Activated naive CD4-positive, alpha-beta T cell treated with anti-CD3 and anti-CD28 coated beads for 36 hours (primary cell): ENCODE measurements at regions of chr2 and their contacts with region 1.

Region 1: DNA sequence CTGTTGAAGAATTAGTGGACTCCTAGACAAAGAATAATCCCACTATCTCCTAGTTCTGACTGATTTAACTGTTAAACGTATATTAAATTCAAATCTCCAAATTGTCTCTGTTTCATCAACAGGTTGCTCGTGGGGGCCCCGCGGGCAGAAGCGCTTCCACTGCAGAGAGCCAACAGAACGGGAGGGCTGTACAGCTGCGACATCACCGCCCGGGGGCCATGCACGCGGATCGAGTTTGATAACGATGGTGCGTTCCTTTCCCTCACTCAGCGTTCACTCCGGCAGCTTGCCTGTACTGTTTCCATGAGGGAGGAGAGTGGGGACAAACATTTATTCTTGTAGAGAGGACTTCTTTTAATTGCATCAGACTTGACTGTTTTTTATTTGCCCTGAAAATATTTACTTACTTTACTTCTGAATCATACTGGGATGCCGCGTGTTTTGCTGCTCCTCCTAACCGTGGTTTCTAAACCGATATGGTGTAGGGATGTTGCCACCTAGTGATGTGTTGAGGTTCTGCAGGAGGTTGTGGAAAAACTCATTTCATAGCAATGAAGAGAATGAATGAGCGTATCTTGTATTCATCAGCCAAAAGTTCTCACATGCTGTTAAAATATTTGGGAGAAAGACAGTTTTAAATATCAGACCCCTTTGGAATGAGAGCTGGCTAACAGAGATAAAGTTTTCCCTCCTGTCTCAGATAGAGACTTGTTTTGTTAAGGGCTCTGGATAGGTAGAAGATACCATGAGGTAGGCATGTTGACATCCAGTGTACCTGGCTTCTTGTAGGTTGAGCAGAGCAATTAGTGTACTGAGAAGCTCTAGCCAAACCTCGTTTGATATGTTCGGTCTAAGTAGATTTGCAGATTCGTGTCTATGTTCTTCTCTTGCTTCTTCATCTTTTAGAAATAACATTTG is 38.3 kb downstream of the ITGA6 start:
- DNase-seq: peak; percentile 91
- H3K4me3 Mint-ChIP-seq: peak overlapping the region; percentile 53
- H3K27ac Mint-ChIP-seq: peak overlapping the region; percentile 75
- H3K4me1 Mint-ChIP-seq: peaks cover 74% of the 10 kb centered on the region
- H3K27me3 Mint-ChIP-seq: no peaks in the 10 kb centered on the region

Region 2: GRCh38 chr2:171703574-171704347 is 761.9 kb before region 1 on chr2:
- CTCF ChIA-PET with region 1: interaction called, 5 read pairs
- intact Hi-C with region 1: loop called (anchors 1 kb)
- DNase-seq: peak; percentile 13
- H3K4me3 Mint-ChIP-seq: no peak overlapping the region
- H3K27ac Mint-ChIP-seq: peak overlapping the region; percentile 26
- H3K4me1 Mint-ChIP-seq: peaks cover 4% of the 10 kb centered on the region
- H3K27me3 Mint-ChIP-seq: no peaks in the 10 kb centered on the region

Region 3: GRCh38 chr2:172172513-172173173 is 293.0 kb before region 1 on chr2:
- CTCF ChIA-PET with region 1: interaction called, 142 read pairs
- intact Hi-C with region 1: loop called (anchors 1 kb)
- DNase-seq: peak; percentile 72
- H3K4me3 Mint-ChIP-seq: peak overlapping the region; percentile 68
- H3K27ac Mint-ChIP-seq: no peak overlapping the region
- H3K4me1 Mint-ChIP-seq: peaks cover 5% of the 10 kb centered on the region
- H3K27me3 Mint-ChIP-seq: no peaks in the 10 kb centered on the region

Region 4: GRCh38 chr2:172253190-172254052 is 212.3 kb before region 1 on chr2:
- CTCF ChIA-PET with region 1: interaction called, 17 read pairs
- intact Hi-C with region 1: loop called (anchors 1 kb)
- DNase-seq: peak; percentile 77
- H3K4me3 Mint-ChIP-seq: no peak overlapping the region
- H3K27ac Mint-ChIP-seq: peak overlapping the region; percentile 65
- H3K4me1 Mint-ChIP-seq: peaks cover 36% of the 10 kb centered on the region
- H3K27me3 Mint-ChIP-seq: no peaks in the 10 kb centered on the region

Region 5: DNA sequence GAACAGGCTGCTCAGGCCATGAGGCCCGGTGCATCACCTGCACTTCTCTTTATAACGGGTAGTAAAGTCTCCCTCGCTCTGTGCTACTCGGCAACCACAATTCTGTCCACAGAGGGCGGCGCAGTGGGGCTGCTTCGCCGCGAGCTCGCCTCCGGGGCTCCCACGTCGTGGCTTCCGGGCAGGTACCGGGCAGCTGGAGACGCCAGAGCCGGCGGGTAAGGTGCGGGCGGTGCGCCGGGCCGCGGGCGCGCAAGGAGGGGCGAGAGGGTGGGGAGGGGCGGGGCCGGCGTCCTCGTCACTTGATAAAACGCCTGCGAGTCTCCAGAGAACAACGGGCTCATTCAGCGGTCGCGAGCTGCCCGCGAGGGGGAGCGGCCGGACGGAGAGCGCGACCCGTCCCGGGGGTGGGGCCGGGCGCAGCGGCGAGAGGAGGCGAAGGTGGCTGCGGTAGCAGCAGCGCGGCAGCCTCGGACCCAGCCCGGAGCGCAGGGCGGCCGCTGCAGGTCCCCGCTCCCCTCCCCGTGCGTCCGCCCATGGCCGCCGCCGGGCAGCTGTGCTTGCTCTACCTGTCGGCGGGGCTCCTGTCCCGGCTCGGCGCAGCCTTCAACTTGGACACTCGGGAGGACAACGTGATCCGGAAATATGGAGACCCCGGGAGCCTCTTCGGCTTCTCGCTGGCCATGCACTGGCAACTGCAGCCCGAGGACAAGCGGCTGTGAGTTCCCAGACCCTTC is 38.3 kb before region 1 on chr2 and contains the start of gene ITGA6:
- CTCF ChIA-PET with region 1: interaction called, 353 read pairs
- intact Hi-C with region 1: loop called (anchors 1 kb)
- DNase-seq: peak; percentile 79
- H3K4me3 Mint-ChIP-seq: peak within 1 kb of the TSS; percentile 81
- H3K27ac Mint-ChIP-seq: peak within 1 kb of the TSS; percentile 83
- H3K4me1 Mint-ChIP-seq: peaks cover 76% of the 10 kb centered on the region
- H3K27me3 Mint-ChIP-seq: no peaks in the 10 kb centered on the region
- total RNA-seq, gene ITGA6: 16.5 to 16.8 TPM

Region 6: GRCh38 chr2:172698041-172698863 is 232.6 kb after region 1 on chr2:
- CTCF ChIA-PET with region 1: interaction called, 8 read pairs
- intact Hi-C with region 1: loop called (anchors 10 kb)
- DNase-seq: peak; percentile 41
- H3K4me3 Mint-ChIP-seq: no peak overlapping the region
- H3K27ac Mint-ChIP-seq: no peak overlapping the region
- H3K4me1 Mint-ChIP-seq: peaks cover 25% of the 10 kb centered on the region
- H3K27me3 Mint-ChIP-seq: no peaks in the 10 kb centered on the region